CD8-positive, alpha-beta T cell (primary cell): ENCODE measurements at regions of chr12 and their contacts with region 1.

Region 1: GRCh38 chr12:52218001-52218400 is 15.0 kb upstream of the KRT7 start:
- DNase-seq: no peak
- ATAC-seq: no peak
- H3K4me3 ChIP-seq: no peak overlapping the region
- H3K4me3 Mint-ChIP-seq: no peak overlapping the region
- H3K27ac ChIP-seq: no peak overlapping the region
- H3K27ac Mint-ChIP-seq: no peak overlapping the region
- H3K4me1 ChIP-seq: no peaks in the 10 kb centered on the region
- H3K4me1 Mint-ChIP-seq: no peaks in the 10 kb centered on the region
- H3K27me3 ChIP-seq: peaks cover 0 to 10% of the 10 kb centered on the region in 2 experiments
- H3K27me3 Mint-ChIP-seq: peaks cover 35% of the 10 kb centered on the region
- CTCF ChIP-seq: no peak

Region 2: GRCh38 chr12:52251367-52252055 is 33.5 kb after region 1 on chr12:
- CTCF ChIA-PET with region 1: interaction called, 3 read pairs
- POLR2A ChIA-PET with region 1: no interaction called
- intact Hi-C with region 1: loop called in 1 of 2 experiments (anchors 2 kb)
- DNase-seq: no peak
- ATAC-seq: no peak
- H3K4me3 ChIP-seq: no peak overlapping the region
- H3K4me3 Mint-ChIP-seq: no peak overlapping the region
- H3K27ac ChIP-seq: no peak overlapping the region
- H3K27ac Mint-ChIP-seq: no peak overlapping the region
- H3K4me1 ChIP-seq: no peaks in the 10 kb centered on the region
- H3K4me1 Mint-ChIP-seq: peaks cover 8% of the 10 kb centered on the region
- H3K27me3 ChIP-seq: peaks cover 4% of the 10 kb centered on the region in 2 experiments
- H3K27me3 Mint-ChIP-seq: peaks cover 39% of the 10 kb centered on the region
- CTCF ChIP-seq: no peak